ENCODE measurements at regions of chr10 and their contacts with region 1.

Region 1: GRCh38 chr10:89954787-89955566 is 253.6 kb downstream of the KIF20B start:
- DNase-seq: no peak
- ATAC-seq: no peak
- H3K4me3 Mint-ChIP-seq: no peak overlapping the region
- H3K27ac Mint-ChIP-seq: no peak overlapping the region
- H3K4me1 Mint-ChIP-seq: no peaks in the 10 kb centered on the region
- H3K27me3 Mint-ChIP-seq: peaks cover 4% of the 10 kb centered on the region
- CTCF ChIP-seq: peak; percentile 50

Region 2: GRCh38 chr10:90138844-90139243 is 183.9 kb after region 1 on chr10:
- CTCF ChIA-PET with region 1: no interaction called
- POLR2A ChIA-PET with region 1: no interaction called
- intact Hi-C with region 1: loop called (anchors 5 kb)
- DNase-seq: no peak
- ATAC-seq: no peak
- H3K4me3 Mint-ChIP-seq: no peak overlapping the region
- H3K27ac Mint-ChIP-seq: no peak overlapping the region
- H3K4me1 Mint-ChIP-seq: no peaks in the 10 kb centered on the region
- H3K27me3 Mint-ChIP-seq: no peaks in the 10 kb centered on the region
- CTCF ChIP-seq: peak; percentile 62

Measured in activated CD8-positive, alpha-beta T cell treated with anti-CD3 and anti-CD28 coated beads for 36 hours (primary cell).